Gastrocnemius medialis (tissue), 4 donors: ENCODE measurements at regions of chr12 and their contacts with region 1.

Region 1: DNA sequence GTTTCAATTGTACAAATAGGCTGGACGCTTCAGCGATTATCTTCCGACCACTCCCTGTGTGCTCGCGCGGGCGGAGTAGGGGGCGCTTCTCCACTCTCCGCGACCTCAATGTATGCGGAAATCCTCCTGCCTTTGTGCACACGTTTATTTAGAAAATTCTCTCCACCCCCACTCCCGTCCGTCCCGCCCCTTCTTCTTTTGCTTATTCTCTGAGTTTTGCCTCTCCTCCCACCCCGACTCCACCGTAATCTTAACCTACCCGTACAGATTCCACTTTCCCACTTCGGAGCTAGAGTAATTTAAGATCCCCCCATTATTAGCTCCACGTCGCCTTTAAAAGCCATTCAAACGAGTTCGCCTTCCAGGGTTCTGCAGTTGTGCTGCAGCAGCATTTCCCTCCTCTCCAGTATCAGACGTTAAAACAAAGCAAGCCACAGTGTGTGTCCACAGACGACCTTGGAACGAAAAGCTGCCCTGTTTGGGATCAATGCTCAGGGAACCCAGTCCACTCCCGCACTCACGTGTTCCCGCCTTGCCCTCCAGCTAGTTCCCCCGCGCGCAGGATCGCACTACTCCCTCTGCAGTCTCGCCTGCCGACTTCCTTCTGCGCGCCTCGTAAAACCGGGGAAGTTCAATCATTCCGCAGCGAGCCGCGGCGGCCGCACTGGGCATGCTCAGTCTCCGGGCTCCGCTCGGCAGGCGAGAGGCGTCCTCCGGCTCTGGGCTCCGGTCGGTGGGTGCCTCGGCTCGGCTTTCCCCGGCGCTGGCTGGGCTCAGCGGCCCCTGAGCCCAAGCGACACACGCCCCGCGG is at the start of gene ANO6:
- DNase-seq: peak; percentile 81 to 85
- ATAC-seq: peak; percentile 86 to 90
- H3K4me3 ChIP-seq: peak within 1 kb of the TSS; percentile 78 to 98 (median 94)
- H3K27ac ChIP-seq: peak within 1 kb of the TSS; percentile 91 to 99 (median 96)
- H3K4me1 ChIP-seq: peaks cover 27 to 32% of the 10 kb centered on the region in 2 donors
- H3K27me3 ChIP-seq: no peaks in the 10 kb centered on the region
- CTCF ChIP-seq: peak in 1 of 5 experiments; percentile 42
- POLR2A ChIP-seq: peak; percentile 83
- total RNA-seq, gene ANO6: 75.4 to 100 (median 91.8) TPM

Region 2: DNA sequence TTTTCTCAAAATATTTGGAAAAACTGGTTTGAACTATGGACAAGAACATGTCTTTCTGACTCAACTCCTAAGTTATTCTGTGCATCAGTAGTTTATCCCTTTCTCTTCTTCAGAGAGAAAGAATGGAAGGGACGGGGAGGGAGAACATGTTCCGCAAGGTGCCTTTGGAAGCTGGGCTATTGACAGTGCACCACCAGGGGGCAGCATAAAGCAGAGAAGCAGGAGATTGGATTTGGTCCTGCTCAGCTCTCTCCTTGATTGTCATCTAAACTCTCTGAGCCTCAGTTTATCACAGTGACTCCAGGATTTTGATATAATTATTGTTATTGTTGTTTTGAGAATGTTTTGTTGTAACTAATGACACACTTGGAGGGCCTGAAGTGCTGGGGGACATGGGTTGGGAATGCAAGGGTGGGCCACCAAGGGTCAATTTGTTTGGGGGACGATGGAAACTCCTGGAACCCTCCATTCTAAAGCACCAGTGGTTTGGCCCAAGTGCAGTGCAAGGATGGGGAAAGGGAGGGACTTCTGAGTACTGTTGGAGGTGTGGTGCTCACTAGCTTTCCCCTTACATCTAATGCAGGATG is 45.1 kb before region 1 on chr12:
- in situ Hi-C with region 1: no loop called
- intact Hi-C with region 1: loop called (anchors 2 kb)
- DNase-seq: peak; percentile 56 to 74
- ATAC-seq: peak; percentile 75 to 92
- H3K4me3 ChIP-seq: no peak overlapping the region
- H3K27ac ChIP-seq: no peak overlapping the region
- H3K4me1 ChIP-seq: peaks cover 19 to 25% of the 10 kb centered on the region in 2 donors
- H3K27me3 ChIP-seq: no peaks in the 10 kb centered on the region
- CTCF ChIP-seq: peak; percentile 72 to 91 (median 79)
- POLR2A ChIP-seq: no peak

Region 3: GRCh38 chr12:45290204-45290580 is 74.6 kb after region 1 on chr12:
- in situ Hi-C with region 1: no loop called
- intact Hi-C with region 1: loop called (anchors 2 kb)
- DNase-seq: peak; percentile 48 to 65
- ATAC-seq: peak; percentile 93
- H3K4me3 ChIP-seq: peak overlapping the region in 3 of 4 donors; percentile 13 to 27 (median 21)
- H3K27ac ChIP-seq: peak overlapping the region; percentile 89 to 93 (median 90)
- H3K4me1 ChIP-seq: peaks cover 39 to 40% of the 10 kb centered on the region in 2 donors
- H3K27me3 ChIP-seq: no peaks in the 10 kb centered on the region
- CTCF ChIP-seq: no peak
- POLR2A ChIP-seq: no peak

Region 4: DNA sequence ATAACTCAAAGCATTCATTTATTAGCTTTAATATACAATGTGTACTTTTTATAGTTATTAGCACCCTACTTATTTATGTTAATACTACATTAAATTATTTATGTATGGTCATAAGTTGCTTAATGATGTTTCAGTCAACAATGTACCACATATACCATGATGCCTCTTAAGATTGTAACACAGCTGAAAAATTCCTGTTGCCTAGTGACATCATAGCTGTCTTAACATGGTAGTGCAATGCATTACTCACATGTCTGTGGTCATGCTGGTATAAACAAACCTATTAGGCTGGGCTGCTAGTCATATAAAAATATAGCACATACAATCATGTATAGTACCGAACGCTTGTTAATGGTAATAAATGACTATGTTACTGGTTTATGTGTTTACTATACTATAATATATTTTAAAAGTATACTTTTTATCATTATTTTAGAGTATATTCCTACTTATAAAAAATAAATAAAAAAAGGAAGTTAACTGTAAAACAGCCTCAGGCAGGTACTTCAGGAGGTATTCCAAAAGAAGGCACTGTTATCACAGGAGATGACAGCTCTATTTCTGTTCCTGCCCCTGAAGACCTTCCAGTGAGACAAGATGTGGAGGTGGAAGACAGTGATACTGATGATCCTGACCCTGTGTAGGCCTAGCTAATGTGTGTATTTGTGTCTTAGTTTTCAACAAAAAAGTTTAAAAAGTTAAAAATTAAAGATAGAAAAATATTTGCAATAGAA is 120.9 kb after region 1 on chr12:
- in situ Hi-C with region 1: no loop called
- intact Hi-C with region 1: loop called (anchors 2 kb)
- DNase-seq: no peak
- ATAC-seq: peak; percentile 49 to 54
- H3K4me3 ChIP-seq: no peak overlapping the region
- H3K27ac ChIP-seq: peak overlapping the region; percentile 63 to 80 (median 74)
- H3K4me1 ChIP-seq: peaks cover 27 to 28% of the 10 kb centered on the region in 2 donors
- H3K27me3 ChIP-seq: no peaks in the 10 kb centered on the region
- CTCF ChIP-seq: no peak
- POLR2A ChIP-seq: no peak

Region 5: DNA sequence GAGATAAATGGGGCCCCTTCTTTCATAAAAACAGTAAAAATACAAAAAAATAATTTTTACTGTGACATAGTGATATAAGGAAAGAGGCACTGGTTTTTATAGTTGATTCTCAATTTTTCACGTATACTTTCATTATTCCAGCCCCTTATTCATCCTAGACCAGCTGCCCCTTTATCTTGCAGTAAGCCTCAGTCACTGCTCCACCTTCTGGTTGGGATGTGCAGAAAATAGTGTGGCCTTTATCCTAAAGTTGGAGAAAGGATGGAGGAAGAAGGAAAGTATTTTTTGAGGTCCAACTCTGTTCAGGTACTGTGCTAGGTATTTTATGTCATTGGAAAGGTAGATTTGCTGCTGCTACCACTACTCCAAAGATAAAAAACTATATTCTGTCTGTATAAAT is 172.9 kb after region 1 on chr12:
- in situ Hi-C with region 1: loop called in 2 of 4 experiments (anchors 10 to 25 kb)
- intact Hi-C with region 1: no loop called
- DNase-seq: no peak
- ATAC-seq: no peak
- H3K4me3 ChIP-seq: no peak overlapping the region
- H3K27ac ChIP-seq: no peak overlapping the region
- H3K4me1 ChIP-seq: no peaks in the 10 kb centered on the region
- H3K27me3 ChIP-seq: no peaks in the 10 kb centered on the region
- CTCF ChIP-seq: peak; percentile 22 to 49 (median 41)
- POLR2A ChIP-seq: no peak

Region 6: DNA sequence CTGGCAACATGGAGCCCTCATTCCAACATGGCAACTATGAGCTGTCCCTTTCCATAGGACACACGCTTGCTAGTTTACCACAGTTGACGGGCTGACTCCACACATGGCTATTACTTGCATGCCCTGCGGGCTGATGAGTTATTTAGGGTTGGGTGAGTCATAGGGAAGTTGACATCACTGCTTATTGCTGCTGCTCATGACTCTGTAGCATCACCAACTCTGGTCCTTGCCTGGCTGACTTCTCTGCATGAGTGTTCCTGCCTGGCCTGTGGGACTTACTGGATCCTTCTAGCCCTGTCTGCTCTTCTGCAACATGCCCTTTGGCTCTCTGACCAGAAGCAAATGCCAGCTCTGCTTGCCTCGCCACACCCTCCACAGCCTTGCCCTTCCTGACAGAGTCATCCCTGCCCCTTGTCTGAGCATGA is 199.8 kb after region 1 on chr12:
- in situ Hi-C with region 1: no loop called
- intact Hi-C with region 1: loop called (anchors 2 kb)
- DNase-seq: peak; percentile 84 to 94
- ATAC-seq: peak; percentile 99 to 100
- H3K4me3 ChIP-seq: no peak overlapping the region
- H3K27ac ChIP-seq: peak overlapping the region; percentile 74 to 90 (median 82)
- H3K4me1 ChIP-seq: peaks cover 0 to 7% of the 10 kb centered on the region in 2 donors
- H3K27me3 ChIP-seq: no peaks in the 10 kb centered on the region
- CTCF ChIP-seq: no peak
- POLR2A ChIP-seq: no peak

Region 7: DNA sequence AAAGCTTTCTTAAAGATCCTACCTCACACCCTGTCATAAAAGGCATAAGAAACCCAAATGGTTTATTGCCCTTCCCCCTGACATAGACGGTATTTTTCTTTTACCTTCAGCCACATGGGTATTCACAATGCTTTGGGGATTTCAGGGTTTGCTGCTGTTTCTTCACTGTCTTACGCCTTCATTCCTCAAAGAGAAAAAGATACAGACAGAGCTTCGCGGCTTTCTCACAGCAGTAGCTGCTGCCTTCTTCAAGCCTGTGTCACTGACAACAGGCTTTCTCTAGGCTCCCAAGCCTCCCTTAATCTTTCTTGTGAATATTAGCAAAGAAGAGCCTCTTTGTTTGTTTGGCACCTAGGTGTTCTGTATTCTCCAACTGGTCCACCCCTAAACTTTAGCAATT is 316.5 kb after region 1 on chr12:
- in situ Hi-C with region 1: no loop called
- intact Hi-C with region 1: no loop called
- DNase-seq: no peak
- ATAC-seq: no peak
- H3K4me3 ChIP-seq: no peak overlapping the region
- H3K27ac ChIP-seq: no peak overlapping the region
- H3K4me1 ChIP-seq: no peaks in the 10 kb centered on the region
- H3K27me3 ChIP-seq: no peaks in the 10 kb centered on the region
- CTCF ChIP-seq: no peak
- POLR2A ChIP-seq: no peak